ENCODE measurements at regions of chr16 and their contacts with region 1.

Region 1: DNA sequence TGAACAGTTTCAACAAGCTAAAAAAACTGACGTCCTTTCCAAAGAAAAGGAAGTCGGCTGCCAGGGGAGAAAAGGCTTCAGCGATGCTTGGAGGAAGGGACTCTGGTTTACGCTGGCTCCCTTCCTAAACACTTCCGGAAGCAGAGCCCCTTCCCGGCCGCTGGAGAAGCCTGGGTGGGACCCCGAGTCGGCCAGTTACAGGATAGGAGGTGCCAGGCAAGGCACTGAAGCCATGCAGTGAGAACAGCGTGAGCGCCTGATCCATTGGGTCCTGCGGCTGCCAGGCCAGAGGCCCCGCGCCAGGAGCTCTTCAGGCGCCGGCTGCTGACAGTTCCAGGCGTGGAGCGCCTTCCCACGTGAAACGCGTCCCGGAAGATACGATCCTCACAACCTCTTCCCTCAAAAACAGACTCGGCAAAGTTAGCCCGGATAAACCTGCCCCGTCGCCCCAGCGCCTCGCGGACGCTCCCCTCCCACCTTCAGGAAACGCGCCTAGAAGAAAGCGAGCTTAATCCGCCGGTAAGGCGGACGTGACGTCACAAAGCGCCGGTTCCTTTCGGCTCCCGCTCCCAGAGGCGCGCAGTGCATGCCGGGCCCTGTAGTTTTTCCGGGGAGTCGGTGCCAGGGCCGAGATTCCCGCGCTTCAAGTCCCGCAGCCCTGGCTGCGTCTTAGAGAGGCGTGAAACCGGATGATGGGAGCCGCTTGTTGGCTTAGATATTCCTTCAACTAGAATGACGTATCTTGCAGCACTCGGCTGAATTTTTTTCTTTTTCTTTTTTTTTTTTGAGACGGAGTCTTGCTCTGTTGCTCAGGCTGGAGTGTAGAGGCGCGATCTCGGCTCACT is at the start of gene ADAT1:
- DNase-seq: peak; percentile 99
- H3K4me3 ChIP-seq: peak within 1 kb of the TSS; percentile 59 to 68 (median 63)
- H3K27ac ChIP-seq: peak within 1 kb of the TSS; percentile 85 to 92 (median 90)
- H3K4me1 ChIP-seq: peaks cover 0 to 20% (median 15%) of the 10 kb centered on the region in 4 donors
- H3K27me3 ChIP-seq: no peaks in the 10 kb centered on the region
- CTCF ChIP-seq: no peak
- EP300 ChIP-seq: peak in 2 of 4 donors; percentile 28 to 53
- POLR2A ChIP-seq: peak; percentile 82 to 83
- total RNA-seq, gene ADAT1: 21.7 to 38.5 (median 28.8) TPM

Region 2: DNA sequence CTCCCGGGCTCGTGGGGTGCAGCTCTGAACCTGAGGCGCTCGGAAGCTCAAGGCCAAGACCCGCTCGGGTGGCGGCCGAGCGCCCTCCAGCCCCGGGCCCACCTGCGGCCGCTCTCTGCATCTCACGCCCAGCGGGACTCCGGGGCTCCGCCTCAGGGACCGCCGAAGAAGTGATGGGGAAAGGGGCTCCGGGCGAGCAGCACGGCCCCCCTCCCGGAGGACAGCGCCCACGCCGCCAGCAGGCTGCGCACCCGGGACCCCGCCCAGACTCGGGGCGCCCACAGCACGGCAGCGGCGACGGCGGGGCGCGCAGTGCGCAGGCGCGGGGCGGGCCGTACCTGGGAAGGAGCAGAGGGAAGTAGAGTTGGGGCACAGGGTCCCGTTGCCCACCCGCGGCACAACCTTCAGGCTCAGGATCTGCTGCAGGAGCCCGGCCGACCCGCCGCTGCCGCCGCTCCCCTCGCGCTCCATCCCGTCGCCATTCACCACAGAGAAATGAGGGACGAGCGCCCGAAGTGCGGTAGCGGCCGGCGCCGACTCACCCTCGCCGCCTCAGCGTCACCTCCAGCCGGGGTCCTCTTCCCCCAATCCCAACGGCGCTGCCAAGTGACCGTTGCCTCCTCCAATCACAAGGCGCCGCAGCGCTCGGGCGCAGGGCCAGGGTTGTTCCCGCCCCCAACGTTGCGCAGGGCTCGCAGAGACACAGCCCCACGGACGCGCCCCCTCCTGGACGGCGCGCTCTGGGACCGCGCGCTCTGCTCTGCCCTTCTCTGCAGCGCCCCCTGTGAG is 158.7 kb before region 1 on chr16 and contains the start of gene TMEM170A:
- intact Hi-C with region 1: loop called (anchors 2 kb)
- DNase-seq: peak; percentile 100
- H3K4me3 ChIP-seq: peak within 1 kb of the TSS; percentile 86 to 93 (median 88)
- H3K27ac ChIP-seq: peak within 1 kb of the TSS; percentile 96 to 99 (median 97)
- H3K4me1 ChIP-seq: peaks cover 0 to 20% (median 14%) of the 10 kb centered on the region in 4 donors
- H3K27me3 ChIP-seq: no peaks in the 10 kb centered on the region
- CTCF ChIP-seq: peak; percentile 100
- EP300 ChIP-seq: no peak
- POLR2A ChIP-seq: peak; percentile 94
- total RNA-seq, gene TMEM170A: 12.7 to 18.2 (median 15.3) TPM

Region 3: DNA sequence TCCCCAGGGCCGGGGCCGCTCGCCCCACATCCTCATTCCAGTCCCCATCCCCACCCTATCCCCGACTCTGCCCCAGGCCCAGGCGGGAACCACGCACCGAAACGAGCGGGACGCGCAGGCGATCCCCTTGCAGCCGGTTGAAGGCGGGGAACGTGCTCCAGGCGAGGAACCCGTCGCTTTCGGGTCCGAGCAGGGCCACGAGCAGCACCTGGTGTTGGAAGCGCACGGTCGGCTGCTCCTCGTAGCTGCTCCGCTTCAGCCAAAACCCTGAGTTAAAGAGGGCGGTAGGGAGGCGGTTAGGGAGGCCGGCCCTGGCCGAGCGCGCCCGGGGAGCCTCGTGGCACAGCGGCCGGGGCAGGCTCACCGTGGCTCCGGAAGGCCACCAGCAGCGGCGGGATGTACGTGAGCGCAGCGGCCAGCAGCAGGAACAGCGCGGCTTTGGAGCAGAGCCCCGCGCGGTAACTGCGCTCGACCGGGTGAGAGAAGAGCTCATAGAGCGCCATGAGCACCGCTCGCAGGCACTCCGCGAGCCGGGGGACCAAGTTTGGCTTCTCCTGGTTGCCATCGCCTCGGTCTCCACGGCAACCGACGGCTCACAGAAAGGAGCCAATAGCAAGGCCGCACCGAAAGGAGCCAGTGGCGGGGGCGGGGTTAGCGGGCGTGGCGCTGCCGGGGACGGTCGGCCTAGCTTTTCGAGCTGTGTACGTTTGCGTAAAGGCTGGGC is 67.1 kb before region 1 on chr16 and contains the start of gene TMEM231:
- intact Hi-C with region 1: loop called (anchors 2 kb)
- DNase-seq: peak; percentile 99
- H3K4me3 ChIP-seq: peak within 1 kb of the TSS; percentile 45 to 77 (median 68)
- H3K27ac ChIP-seq: peak within 1 kb of the TSS; percentile 81 to 86 (median 83)
- H3K4me1 ChIP-seq: peaks cover 0 to 12% (median 9%) of the 10 kb centered on the region in 4 donors
- H3K27me3 ChIP-seq: no peaks in the 10 kb centered on the region
- CTCF ChIP-seq: no peak
- EP300 ChIP-seq: no peak
- POLR2A ChIP-seq: no peak
- total RNA-seq, gene TMEM231: 3.5 to 8.8 (median 5.9) TPM

Region 4: GRCh38 chr16:75647492-75648264 is 24.7 kb after region 1 on chr16 and contains the starts of genes KARS1 and TERF2IP:
- intact Hi-C with region 1: loop called (anchors 1 kb)
- DNase-seq: peak; percentile 96
- H3K4me3 ChIP-seq: peak within 1 kb of the TSS; percentile 92 to 98 (median 94)
- H3K27ac ChIP-seq: peak within 1 kb of the TSS; percentile 96 to 100 (median 97)
- H3K4me1 ChIP-seq: peaks cover 0 to 58% (median 52%) of the 10 kb centered on the region in 4 donors
- H3K27me3 ChIP-seq: no peaks in the 10 kb centered on the region
- CTCF ChIP-seq: no peak
- EP300 ChIP-seq: no peak
- POLR2A ChIP-seq: peak; percentile 95 to 98
- total RNA-seq, gene KARS1: 98.3 to 113 (median 111) TPM
- total RNA-seq, gene TERF2IP: 49.0 to 76.0 (median 65.5) TPM

Region 5: GRCh38 chr16:77190478-77191258 is 1567.7 kb after region 1 on chr16 and contains the start of gene MON1B:
- intact Hi-C with region 1: loop called (anchors 2 kb)
- DNase-seq: peak; percentile 99
- H3K4me3 ChIP-seq: peak within 1 kb of the TSS; percentile 69 to 90 (median 88)
- H3K27ac ChIP-seq: peak within 1 kb of the TSS; percentile 89 to 97 (median 91)
- H3K4me1 ChIP-seq: peaks cover 0 to 23% (median 18%) of the 10 kb centered on the region in 4 donors
- H3K27me3 ChIP-seq: no peaks in the 10 kb centered on the region
- CTCF ChIP-seq: no peak
- EP300 ChIP-seq: peak in 1 of 4 donors; percentile 48
- POLR2A ChIP-seq: peak; percentile 27 to 81
- total RNA-seq, gene MON1B: 12.8 to 19.4 (median 13.5) TPM